ENCODE measurements at regions of chr22 and their contacts with region 1.

Region 1: GRCh38 chr22:41746567-41747400 is 47.5 kb downstream of the MEI1 start:
- DNase-seq: peak; percentile 90
- H3K4me3 Mint-ChIP-seq: no peak overlapping the region
- H3K27ac Mint-ChIP-seq: no peak overlapping the region
- H3K4me1 Mint-ChIP-seq: no peaks in the 10 kb centered on the region
- H3K27me3 Mint-ChIP-seq: peaks cover 19% of the 10 kb centered on the region
- CTCF ChIP-seq: peak; percentile 67

Region 2: GRCh38 chr22:41613456-41613855 is 133.3 kb before region 1 on chr22:
- CTCF ChIA-PET with region 1: no interaction called
- POLR2A ChIA-PET with region 1: no interaction called
- intact Hi-C with region 1: no loop called
- DNase-seq: no peak
- H3K4me3 Mint-ChIP-seq: no peak overlapping the region
- H3K27ac Mint-ChIP-seq: no peak overlapping the region
- H3K4me1 Mint-ChIP-seq: peaks cover 20% of the 10 kb centered on the region
- H3K27me3 Mint-ChIP-seq: no peaks in the 10 kb centered on the region
- CTCF ChIP-seq: no peak

Region 3: GRCh38 chr22:41762980-41763779 is 16.4 kb after region 1 on chr22:
- CTCF ChIA-PET with region 1: interaction called, 16 read pairs
- POLR2A ChIA-PET with region 1: no interaction called
- intact Hi-C with region 1: no loop called
- DNase-seq: peak; percentile 36
- H3K4me3 Mint-ChIP-seq: no peak overlapping the region
- H3K27ac Mint-ChIP-seq: no peak overlapping the region
- H3K4me1 Mint-ChIP-seq: peaks cover 6% of the 10 kb centered on the region
- H3K27me3 Mint-ChIP-seq: no peaks in the 10 kb centered on the region
- CTCF ChIP-seq: peak; percentile 27

Region 4: DNA sequence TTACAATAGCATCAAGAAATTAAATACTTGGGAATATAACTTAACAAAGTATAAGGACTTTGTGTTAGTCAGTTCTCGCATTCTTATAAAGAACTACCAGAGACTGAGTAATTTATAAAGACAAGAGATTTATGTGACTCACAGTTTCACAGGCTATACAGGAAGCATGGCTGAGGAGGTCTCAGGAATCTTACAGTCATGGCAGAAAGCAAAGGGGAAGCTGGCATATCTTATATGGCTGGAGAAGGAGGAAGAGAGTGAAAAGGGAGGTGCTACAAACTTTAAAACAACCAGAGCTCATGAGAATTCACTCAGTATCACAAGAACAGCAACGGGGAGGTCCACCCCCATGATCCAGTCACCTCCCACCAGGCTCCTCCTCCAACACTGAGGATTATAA is 21.6 kb after region 1 on chr22:
- CTCF ChIA-PET with region 1: interaction called, 16 read pairs
- POLR2A ChIA-PET with region 1: interaction called, 4 read pairs
- intact Hi-C with region 1: no loop called
- DNase-seq: peak; percentile 47
- H3K4me3 Mint-ChIP-seq: no peak overlapping the region
- H3K27ac Mint-ChIP-seq: no peak overlapping the region
- H3K4me1 Mint-ChIP-seq: peaks cover 6% of the 10 kb centered on the region
- H3K27me3 Mint-ChIP-seq: no peaks in the 10 kb centered on the region
- CTCF ChIP-seq: no peak

Region 5: DNA sequence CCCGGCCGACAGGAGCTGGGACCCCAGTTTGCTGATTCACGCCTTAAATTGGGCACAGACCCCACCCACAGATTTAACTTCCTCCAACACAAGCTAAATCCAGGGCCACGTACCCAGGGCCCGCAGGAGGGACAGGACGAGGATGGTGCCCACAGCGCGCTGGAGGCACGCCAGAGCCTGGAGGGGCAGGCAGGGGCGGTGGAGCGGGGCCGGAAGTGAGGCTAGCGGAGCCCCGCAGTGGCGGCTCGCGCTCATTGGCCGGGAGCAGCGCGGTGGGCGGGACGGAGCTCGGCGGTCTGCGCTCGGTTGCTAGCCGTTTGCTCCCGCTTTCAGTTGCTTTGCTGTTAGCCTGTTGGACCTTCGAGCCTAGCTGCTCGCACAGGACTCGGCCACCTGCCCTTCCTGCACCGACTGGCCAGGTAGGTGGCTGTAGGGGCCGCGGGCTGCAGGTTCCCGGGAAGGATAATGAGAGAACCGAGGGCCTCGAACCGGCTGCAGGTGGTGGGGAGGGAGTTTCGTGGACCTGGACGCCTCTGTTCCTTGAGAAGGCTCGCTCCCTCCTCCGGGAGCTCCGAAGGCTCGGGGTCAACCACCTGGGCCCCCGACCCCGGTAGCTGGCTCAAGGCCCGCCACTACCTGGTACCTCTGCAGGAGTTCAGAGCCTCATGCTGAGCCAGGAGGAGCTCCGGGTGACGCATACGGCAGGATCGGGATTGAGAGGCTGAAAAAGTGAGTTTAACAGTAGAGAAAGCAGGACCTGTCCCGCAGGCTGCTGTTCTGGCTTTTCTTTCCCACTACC is 53.8 kb after region 1 on chr22 and contains the start of gene CCDC134:
- CTCF ChIA-PET with region 1: interaction called, 20 read pairs
- POLR2A ChIA-PET with region 1: interaction called, 16 read pairs
- intact Hi-C with region 1: loop called (anchors 1 kb)
- DNase-seq: peak; percentile 83
- H3K4me3 Mint-ChIP-seq: peak within 1 kb of the TSS; percentile 84
- H3K27ac Mint-ChIP-seq: peak within 1 kb of the TSS; percentile 91
- H3K4me1 Mint-ChIP-seq: peaks cover 14% of the 10 kb centered on the region
- H3K27me3 Mint-ChIP-seq: no peaks in the 10 kb centered on the region
- CTCF ChIP-seq: no peak
- total RNA-seq, gene CCDC134: 4.0 and 4.3 TPM in 2 replicates

Region 6: GRCh38 chr22:41832553-41833368 is 86.0 kb after region 1 on chr22 and contains the start of gene SREBF2:
- CTCF ChIA-PET with region 1: interaction called, 3 read pairs
- POLR2A ChIA-PET with region 1: interaction called, 12 read pairs
- intact Hi-C with region 1: no loop called
- DNase-seq: peak; percentile 100
- H3K4me3 Mint-ChIP-seq: peak within 1 kb of the TSS; percentile 82
- H3K27ac Mint-ChIP-seq: peak within 1 kb of the TSS; percentile 98
- H3K4me1 Mint-ChIP-seq: peaks cover 17% of the 10 kb centered on the region
- H3K27me3 Mint-ChIP-seq: no peaks in the 10 kb centered on the region
- CTCF ChIP-seq: no peak
- total RNA-seq, gene SREBF2: 88.4 and 104 TPM in 2 replicates

Region 7: GRCh38 chr22:41857155-41857859 is 110.5 kb after region 1 on chr22:
- CTCF ChIA-PET with region 1: interaction called, 8 read pairs
- POLR2A ChIA-PET with region 1: no interaction called
- intact Hi-C with region 1: loop called (anchors 1 kb)
- DNase-seq: peak; percentile 94
- H3K4me3 Mint-ChIP-seq: peak overlapping the region; percentile 43
- H3K27ac Mint-ChIP-seq: peak overlapping the region; percentile 81
- H3K4me1 Mint-ChIP-seq: peaks cover 29% of the 10 kb centered on the region
- H3K27me3 Mint-ChIP-seq: no peaks in the 10 kb centered on the region
- CTCF ChIP-seq: peak; percentile 48

Region 8: DNA sequence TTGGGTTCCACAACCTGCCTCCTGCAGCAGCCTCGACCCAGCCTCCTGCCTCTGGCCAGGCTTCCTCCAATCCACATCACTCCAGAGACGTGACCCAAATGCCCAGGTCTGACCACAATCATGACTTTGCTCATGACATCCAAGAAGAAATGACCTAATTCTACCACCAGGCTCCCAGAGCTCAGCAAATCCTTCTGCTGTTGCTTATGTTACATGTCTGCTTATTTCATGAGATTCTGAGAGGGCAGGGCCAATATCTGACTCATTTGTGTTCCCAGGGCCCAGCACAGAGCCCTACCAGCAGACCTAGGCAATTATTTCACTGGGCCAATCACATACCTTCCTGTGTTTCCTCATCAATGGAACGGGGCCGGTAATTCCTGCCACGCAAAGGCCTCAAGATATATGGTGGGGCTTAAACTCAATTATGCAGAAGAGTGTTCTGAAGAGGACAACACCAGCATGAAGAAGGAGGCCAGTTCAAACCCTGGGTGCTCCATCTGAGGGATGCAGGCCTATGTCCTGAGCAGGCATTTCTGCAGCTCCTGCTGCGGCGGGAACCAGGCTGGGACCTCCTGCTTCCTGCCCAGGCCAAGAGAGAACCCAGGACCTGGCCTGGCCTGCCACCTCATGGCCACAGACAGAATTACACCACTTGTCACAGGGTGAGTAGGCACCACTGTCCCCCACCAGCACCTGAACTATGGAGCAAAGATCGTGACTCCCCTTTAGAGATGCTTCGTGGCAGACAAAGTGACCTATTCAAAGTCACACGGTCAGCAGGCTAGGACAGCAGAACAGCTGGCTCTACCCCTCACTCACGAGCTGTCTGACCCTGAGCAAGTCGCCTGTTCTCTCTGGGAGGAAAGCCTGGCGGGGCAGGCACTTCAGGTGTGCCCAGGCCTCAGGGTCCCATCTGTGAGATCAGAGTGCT is 194.3 kb after region 1 on chr22:
- CTCF ChIA-PET with region 1: interaction called, 4 read pairs
- POLR2A ChIA-PET with region 1: no interaction called
- intact Hi-C with region 1: loop called (anchors 1 kb)
- DNase-seq: peak; percentile 78
- H3K4me3 Mint-ChIP-seq: peak overlapping the region; percentile 7
- H3K27ac Mint-ChIP-seq: peak overlapping the region; percentile 91
- H3K4me1 Mint-ChIP-seq: peaks cover 24% of the 10 kb centered on the region
- H3K27me3 Mint-ChIP-seq: no peaks in the 10 kb centered on the region
- CTCF ChIP-seq: peak; percentile 95

Measured in MCF 10A (cell line).